ENCODE measurements at regions of chr17 and their contacts with region 1.

Region 1: DNA sequence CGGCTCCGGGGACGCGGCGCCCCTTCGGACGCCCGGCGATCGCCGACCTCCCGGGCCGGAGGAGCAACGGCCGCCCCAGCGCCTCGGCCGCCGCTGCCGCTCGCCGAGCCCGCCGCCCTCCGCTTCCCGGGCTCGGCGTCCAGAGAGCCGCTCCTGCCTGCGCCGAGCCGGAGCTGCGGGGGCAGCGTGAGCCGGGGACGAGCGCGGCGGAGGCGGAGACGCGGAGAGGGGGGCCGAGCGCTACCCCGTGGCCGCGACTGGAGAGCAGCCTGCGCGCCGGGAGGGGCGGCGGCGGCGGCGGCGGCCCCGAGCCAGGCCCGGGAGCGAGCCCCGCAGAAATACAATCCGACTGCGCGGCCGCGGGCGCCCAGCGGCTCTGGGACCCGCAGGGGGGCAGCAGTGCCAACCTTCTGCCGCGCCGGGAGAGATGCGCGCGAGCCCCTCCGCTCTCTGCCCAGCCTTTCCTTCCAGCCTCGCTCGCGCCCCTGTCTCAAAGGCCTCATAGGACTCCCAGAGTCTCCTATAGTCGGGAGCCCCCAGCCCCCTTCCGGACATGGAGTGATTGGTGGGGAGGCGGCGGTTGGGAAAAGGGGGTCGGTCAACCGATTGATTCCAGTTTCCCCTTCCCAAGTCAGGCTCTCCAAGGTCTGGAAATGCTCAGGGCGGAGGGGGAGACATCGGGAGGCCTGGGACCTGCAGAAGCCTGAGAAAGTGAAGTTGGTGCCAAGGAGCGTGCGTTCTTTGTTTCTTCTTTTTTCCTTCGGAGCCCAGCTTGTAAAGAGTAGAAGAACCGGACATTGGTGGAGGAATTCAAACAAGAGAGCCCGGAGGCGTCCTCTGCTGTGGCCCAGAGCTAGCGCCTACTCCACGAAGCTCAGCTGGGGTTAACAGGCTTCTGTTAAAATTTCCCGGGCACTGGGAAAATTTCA is 1.1 kb upstream of the SDK2 start:
- DNase-seq: peak; percentile 40 to 59
- ATAC-seq: peak; percentile 22 to 40
- H3K4me3 ChIP-seq: peak overlapping the region; percentile 59
- H3K27ac ChIP-seq: peak overlapping the region; percentile 67 to 84; a peak in 5 of 6 replicates
- H3K4me1 ChIP-seq: peaks cover 4% of the 10 kb centered on the region; the same call in 1 of the 3 replicates
- CTCF ChIP-seq: peak; percentile 41; the same call in 2 of the 3 replicates
- EP300 ChIP-seq: no peak
- POLR2A ChIP-seq: no peak
- RAD21 ChIP-seq: peak; percentile 9 to 35; a peak in 1 of 5 replicates

Region 2: DNA sequence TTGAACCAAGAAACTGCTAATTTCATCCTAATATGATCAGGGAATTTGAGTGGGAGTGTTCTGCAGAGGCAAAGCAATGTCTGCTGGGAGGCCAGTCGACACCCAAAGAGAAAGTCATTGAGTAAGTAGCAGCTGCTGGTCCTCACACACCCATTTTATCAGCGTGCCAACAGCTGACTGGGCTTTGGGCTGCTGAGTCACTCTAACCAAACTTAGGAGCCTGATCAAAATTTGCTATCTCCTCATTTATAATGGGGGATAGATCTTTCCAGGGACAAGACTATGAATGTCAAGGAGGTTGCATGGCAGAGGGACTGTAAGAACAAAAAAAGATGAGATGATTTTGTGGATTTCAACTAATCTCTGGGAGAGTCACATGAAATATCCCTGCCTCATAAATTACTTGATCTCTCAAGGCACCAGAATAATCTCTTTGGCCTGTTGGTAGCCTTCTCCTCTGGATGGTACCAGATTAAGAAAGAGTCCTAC is 416.5 kb before region 1 on chr17:
- CTCF ChIA-PET with region 1: no interaction called
- POLR2A ChIA-PET with region 1: no interaction called
- DNase-seq: peak; percentile 70 to 86
- ATAC-seq: peak; percentile 20 to 44; a peak in 4 of 6 replicates
- H3K4me3 ChIP-seq: no peak overlapping the region
- H3K27ac ChIP-seq: peak overlapping the region; percentile 59 to 68
- H3K4me1 ChIP-seq: peaks cover 57% of the 10 kb centered on the region
- CTCF ChIP-seq: no peak
- EP300 ChIP-seq: no peak
- POLR2A ChIP-seq: no peak
- RAD21 ChIP-seq: no peak

Region 3: DNA sequence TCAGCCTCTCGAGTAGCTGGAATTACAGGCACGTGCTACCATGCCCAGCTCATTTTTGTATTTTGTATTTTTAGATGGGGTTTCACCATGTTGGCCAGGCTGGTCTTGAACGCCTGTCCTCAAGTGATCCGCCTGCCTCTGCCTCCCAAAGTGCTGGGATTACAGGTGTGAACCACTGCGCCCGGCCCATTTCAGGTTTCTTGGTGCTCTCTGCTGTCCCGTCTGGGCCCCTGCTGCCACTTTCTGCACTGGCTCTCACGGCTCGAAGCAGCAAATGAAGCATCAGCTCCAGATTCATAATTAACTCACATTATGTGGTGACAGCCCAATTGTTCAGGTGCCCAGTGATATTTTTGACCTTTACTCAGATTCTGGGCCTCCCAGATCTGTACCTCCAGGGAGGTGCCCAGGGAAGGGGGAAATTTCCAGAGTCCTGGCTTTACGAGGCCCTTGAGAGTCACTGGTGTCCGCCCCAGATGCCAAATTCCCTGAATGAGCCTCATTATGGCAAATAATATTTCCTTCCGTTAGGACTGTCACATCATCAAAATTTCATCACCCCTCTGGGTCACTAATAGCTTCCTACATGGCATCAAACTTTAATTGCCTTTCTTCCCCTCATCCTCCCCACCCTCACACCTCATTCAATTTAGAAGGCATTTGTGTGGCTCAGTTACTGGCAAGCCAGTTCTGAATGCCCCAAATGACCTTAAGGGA is 10.1 kb before region 1 on chr17:
- CTCF ChIA-PET with region 1: interaction called, 27 read pairs
- POLR2A ChIA-PET with region 1: no interaction called
- DNase-seq: no peak
- ATAC-seq: no peak
- H3K4me3 ChIP-seq: no peak overlapping the region
- H3K27ac ChIP-seq: no peak overlapping the region
- H3K4me1 ChIP-seq: no peaks in the 10 kb centered on the region
- CTCF ChIP-seq: no peak
- EP300 ChIP-seq: no peak
- POLR2A ChIP-seq: no peak
- RAD21 ChIP-seq: no peak

Region 4: DNA sequence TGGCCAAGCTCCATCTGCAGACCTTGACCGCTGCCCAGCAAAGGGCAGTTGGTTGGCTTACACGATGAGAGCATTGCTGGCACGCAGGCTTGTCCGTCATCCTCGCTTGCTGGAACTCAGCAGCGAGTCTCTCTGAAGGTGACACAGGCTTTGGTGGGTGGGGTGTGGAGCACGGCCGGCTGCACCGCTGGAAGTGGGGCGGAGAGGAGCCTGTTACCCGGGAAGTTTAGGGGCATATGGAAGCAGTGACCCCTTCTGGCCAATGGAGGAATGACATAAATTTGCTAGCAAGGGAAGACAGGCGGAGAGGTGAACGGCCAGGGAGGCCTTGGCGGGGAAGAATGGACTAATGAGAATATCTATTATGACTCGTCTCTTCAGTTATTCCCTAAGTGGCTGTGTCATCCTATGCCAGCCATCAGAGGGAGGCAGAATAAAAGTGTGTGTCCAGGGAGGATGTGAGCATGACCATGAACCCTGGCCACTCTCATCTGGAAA is 64.8 kb after region 1 on chr17:
- CTCF ChIA-PET with region 1: interaction called, 62 read pairs
- POLR2A ChIA-PET with region 1: no interaction called
- DNase-seq: peak; percentile 70 to 79
- ATAC-seq: peak; percentile 59 to 90; a peak in 4 of 6 replicates
- H3K4me3 ChIP-seq: no peak overlapping the region
- H3K27ac ChIP-seq: peak overlapping the region in 1 of 2 experiments; percentile 30; a peak in 1 of 6 replicates
- H3K4me1 ChIP-seq: peaks cover 4% of the 10 kb centered on the region; the same call in 2 of the 3 replicates
- CTCF ChIP-seq: peak; percentile 77
- EP300 ChIP-seq: no peak
- POLR2A ChIP-seq: no peak
- RAD21 ChIP-seq: peak; percentile 72 to 84

Region 5: DNA sequence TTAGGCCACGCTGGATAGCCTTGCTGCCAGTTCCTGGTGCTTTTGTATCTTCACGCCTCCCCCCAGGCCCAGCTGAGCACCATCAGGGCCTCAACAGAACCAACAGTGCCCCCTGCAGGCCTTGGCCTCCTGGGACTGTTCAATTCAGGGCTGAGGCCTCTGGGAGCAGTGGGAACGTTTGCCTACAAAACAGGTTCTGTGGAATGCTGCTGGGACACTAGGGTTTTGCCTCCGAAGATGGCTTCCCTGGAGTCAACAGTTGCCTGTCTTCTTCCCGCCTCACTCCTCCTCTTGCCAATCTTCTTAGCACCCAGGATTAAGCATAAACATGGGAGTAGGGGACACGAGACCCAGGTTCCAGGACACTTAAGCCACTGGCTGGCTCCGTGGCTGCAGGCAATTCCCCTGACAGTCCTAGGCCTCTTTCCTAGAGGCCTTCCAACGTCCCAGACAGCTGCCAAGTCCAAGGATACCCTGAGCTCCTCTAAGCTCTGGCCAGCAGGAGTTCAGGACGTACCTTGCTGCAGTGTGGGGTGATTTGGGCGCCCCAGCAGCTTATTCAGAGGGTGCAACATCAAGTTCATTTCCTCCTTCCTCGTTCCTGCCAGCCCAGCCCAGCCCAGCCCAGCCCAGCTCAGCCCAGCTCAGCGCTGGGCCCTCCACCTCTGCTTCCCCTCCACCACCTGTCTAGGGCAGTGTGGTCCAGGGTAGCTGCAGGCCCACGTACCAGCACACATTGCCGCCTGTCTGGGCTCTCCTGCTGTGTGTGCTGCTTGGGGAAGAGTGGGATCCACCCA is 311.6 kb after region 1 on chr17:
- CTCF ChIA-PET with region 1: interaction called, 44 read pairs
- POLR2A ChIA-PET with region 1: no interaction called
- DNase-seq: peak; percentile 78 to 88
- ATAC-seq: peak; percentile 75 to 91
- H3K4me3 ChIP-seq: no peak overlapping the region
- H3K27ac ChIP-seq: no peak overlapping the region; a peak in 1 of 6 replicates
- H3K4me1 ChIP-seq: peaks cover 4% of the 10 kb centered on the region; the same call in 1 of the 3 replicates
- CTCF ChIP-seq: peak; percentile 72
- EP300 ChIP-seq: no peak
- POLR2A ChIP-seq: no peak
- RAD21 ChIP-seq: peak; percentile 88 to 91

Region 6: DNA sequence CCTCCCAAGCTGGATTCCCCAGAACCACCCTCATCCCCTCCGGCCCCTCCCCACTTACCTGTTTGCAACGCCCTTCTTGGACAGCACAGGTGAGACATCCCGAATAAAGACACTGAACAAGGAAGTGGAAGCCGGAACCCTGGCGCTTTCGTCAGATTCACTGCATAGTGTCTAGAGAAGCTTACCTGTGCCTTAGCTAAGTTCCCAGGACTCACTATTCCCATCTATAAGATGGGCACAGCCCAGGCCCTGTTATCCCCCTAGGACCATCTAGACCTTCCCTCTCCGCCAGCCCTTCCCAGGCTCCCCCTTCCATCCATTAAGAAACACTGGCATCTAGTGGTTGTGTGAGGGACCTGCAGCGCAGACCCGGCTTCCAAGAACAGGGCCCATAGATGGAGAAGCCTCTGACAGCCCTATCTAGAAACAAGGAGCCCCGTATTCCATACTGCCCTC is 531.3 kb after region 1 on chr17:
- CTCF ChIA-PET with region 1: interaction called, 37 read pairs
- POLR2A ChIA-PET with region 1: no interaction called
- DNase-seq: peak; percentile 74 to 76
- ATAC-seq: peak; percentile 88 to 96
- H3K4me3 ChIP-seq: no peak overlapping the region
- H3K27ac ChIP-seq: no peak overlapping the region
- H3K4me1 ChIP-seq: no peaks in the 10 kb centered on the region
- CTCF ChIP-seq: peak; percentile 95
- EP300 ChIP-seq: no peak
- POLR2A ChIP-seq: no peak
- RAD21 ChIP-seq: peak; percentile 97 to 98

Measured in A549 (cell line).